ENCODE measurements at regions of chr10 and their contacts with region 1.

Region 1: DNA sequence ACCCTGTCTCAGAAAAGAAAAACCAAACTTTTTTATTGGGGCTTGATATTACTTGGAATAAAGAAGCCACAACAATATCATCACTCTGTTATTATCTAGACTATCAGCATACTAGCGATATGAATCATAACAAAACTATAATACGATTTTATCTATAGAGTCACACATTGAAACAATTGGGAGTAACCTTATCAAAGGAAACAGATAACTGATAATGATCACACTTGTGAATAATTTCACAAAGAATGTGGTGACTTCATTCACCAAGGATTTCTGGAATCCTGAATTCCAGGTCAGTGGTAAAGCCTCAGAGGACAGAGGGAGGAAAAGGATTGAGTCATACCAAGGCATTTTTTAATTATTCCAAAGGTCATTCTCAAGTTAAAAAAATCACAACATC is 32.1 kb upstream of the NMT2 start:
- DNase-seq: peak; percentile 89
- ATAC-seq: peak; percentile 72
- H3K4me3 ChIP-seq: no peak overlapping the region
- H3K27ac ChIP-seq: peak overlapping the region; percentile 57
- H3K4me1 ChIP-seq: peaks cover 49% of the 10 kb centered on the region
- H3K27me3 ChIP-seq: no peaks in the 10 kb centered on the region
- CTCF ChIP-seq: no peak

Region 2: DNA sequence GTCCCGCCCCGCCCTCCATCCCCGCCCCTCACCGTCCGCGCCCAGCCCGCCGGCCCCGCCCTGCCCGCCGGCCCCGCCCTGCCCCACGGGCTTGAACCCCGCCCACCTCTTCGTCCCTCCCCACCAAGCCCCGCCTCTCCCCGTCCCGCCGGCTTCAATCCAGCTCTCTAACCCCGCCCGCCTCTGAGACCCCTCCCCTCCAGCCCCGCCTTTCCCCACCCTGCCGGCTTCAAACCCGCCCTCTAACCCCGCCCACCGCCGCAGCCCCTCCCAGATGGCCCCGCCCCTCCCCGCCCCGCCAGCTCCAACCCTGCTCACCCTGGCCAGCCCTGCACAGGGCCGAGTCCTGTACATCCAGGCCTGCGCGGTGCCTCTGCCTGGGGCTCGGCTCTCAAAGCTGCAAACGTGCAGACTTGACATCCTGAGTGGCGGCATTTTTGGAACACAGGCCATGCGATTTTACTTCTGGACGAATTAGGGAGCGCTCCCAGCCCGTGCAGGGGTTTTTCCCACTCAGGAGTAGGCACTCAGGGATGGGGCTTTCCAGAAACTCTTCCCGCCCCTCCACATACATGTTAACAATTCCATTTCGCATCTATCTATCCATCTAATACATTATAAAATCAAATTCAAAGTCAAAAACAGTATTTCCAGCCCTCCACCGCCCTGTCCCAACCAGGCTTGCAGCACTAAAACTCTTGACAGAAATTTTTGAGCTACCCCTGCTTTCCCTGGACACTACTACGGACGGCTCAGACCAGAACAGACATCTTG is 31.7 kb before region 1 on chr10:
- CTCF ChIA-PET with region 1: no interaction called
- POLR2A ChIA-PET with region 1: no interaction called
- intact Hi-C with region 1: loop called (anchors 5 kb)
- DNase-seq: peak; percentile 73
- ATAC-seq: peak; percentile 68
- H3K4me3 ChIP-seq: no peak overlapping the region
- H3K27ac ChIP-seq: no peak overlapping the region
- H3K4me1 ChIP-seq: peaks cover 13% of the 10 kb centered on the region; the same call in 1 of the 2 replicates
- H3K27me3 ChIP-seq: no peaks in the 10 kb centered on the region
- CTCF ChIP-seq: no peak

Measured in PC-3 (cell line).